ENCODE measurements at regions of chr1 and their contacts with region 1.

Region 1: GRCh38 chr1:210262167-210262896 is 29.7 kb downstream of the SERTAD4 start:
- DNase-seq: no peak
- H3K4me3 ChIP-seq: peak overlapping the region in 5 of 59 donors; percentile 3 to 32 (median 20)
- H3K27ac ChIP-seq: peak overlapping the region in 8 of 59 donors; percentile 10 to 52 (median 22)
- H3K27me3 ChIP-seq: no peaks in the 10 kb centered on the region
- CTCF ChIP-seq: no peak

Region 2: GRCh38 chr1:210099921-210100320 is 162.4 kb before region 1 on chr1:
- intact Hi-C with region 1: no loop called
- DNase-seq: peak in 1 of 10 donors; percentile 64
- H3K4me3 ChIP-seq: no peak overlapping the region
- H3K27ac ChIP-seq: peak overlapping the region in 1 of 59 donors; percentile 83
- H3K27me3 ChIP-seq: no peaks in the 10 kb centered on the region
- CTCF ChIP-seq: no peak

Region 3: DNA sequence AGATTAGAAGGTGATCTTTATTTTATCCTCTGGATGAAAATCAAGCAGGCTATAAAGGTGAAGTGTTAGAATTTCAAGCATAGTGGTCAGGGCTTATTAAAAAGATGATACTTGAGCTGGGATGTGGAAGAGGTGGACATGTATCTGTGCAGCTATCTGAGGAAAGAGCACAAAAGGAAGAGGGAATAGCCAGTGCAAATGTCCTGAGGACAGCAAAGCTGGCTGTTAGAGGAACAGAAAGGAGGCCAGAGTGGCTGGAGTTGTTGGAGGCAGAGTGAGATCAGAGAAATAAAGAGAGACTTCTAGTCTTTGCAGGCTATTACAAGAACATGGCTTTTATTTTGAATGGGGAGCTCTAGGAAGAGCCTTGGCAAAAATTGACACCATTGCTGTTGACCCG is 34.2 kb before region 1 on chr1:
- intact Hi-C with region 1: loop called in 1 of 2 experiments (anchors 5 kb)
- DNase-seq: no peak
- H3K4me3 ChIP-seq: no peak overlapping the region
- H3K27ac ChIP-seq: no peak overlapping the region
- H3K27me3 ChIP-seq: no peaks in the 10 kb centered on the region
- CTCF ChIP-seq: no peak

Region 4: DNA sequence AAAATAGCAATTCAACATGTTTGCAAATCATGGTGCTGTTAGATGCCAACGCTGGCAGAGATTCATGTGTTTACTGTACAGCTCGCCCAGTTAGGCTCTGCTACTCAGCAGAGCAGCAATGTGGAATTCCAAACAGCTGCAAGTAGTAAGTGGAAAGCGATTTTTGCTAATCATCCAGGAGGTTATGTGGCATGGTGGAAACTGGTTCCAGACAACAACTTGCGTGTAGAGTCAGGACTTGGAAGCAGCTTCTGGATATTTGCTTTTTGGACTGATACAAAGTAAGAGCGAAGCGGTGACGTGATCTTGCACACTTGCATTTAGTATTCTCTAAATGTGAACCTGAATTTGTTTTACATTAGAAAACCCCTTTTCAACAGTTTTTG is 39.3 kb after region 1 on chr1:
- intact Hi-C with region 1: loop called in 1 of 2 experiments (anchors 5 kb)
- DNase-seq: no peak
- H3K4me3 ChIP-seq: peak overlapping the region in 5 of 59 donors; percentile 7 to 23 (median 11)
- H3K27ac ChIP-seq: no peak overlapping the region
- H3K27me3 ChIP-seq: no peaks in the 10 kb centered on the region
- CTCF ChIP-seq: no peak